ENCODE measurements at regions of chr1 and their contacts with region 1.

Region 1: GRCh38 chr1:39973503-39974135 is 18.7 kb downstream of the MFSD2A start:
- DNase-seq: peak; percentile 70 to 73
- ATAC-seq: peak; percentile 72 to 90 (median 78)
- H3K4me3 ChIP-seq: no peak overlapping the region
- H3K27ac ChIP-seq: no peak overlapping the region
- H3K4me1 ChIP-seq: peaks cover 0 to 6% (median 0%) of the 10 kb centered on the region in 9 donors
- H3K27me3 ChIP-seq: peaks cover 0 to 16% (median 0%) of the 10 kb centered on the region in 7 donors
- CTCF ChIP-seq: peak; percentile 89 to 99 (median 97)

Region 2: GRCh38 chr1:39238476-39238875 is 735.1 kb before region 1 on chr1:
- intact Hi-C with region 1: no loop called
- DNase-seq: peak in 1 of 2 donors; percentile 67
- ATAC-seq: peak; percentile 55 to 85 (median 80)
- H3K4me3 ChIP-seq: no peak overlapping the region
- H3K27ac ChIP-seq: peak overlapping the region in 6 of 10 donors; percentile 16 to 57 (median 43)
- H3K4me1 ChIP-seq: peaks cover 10 to 38% (median 32%) of the 10 kb centered on the region in 9 donors
- H3K27me3 ChIP-seq: no peaks in the 10 kb centered on the region
- CTCF ChIP-seq: no peak

Region 3: GRCh38 chr1:39866767-39867166 is 106.9 kb before region 1 on chr1:
- intact Hi-C with region 1: no loop called
- DNase-seq: no peak
- ATAC-seq: no peak
- H3K4me3 ChIP-seq: no peak overlapping the region
- H3K27ac ChIP-seq: no peak overlapping the region
- H3K4me1 ChIP-seq: peaks cover 0 to 5% (median 0%) of the 10 kb centered on the region in 9 donors
- H3K27me3 ChIP-seq: no peaks in the 10 kb centered on the region
- CTCF ChIP-seq: no peak

Region 4: GRCh38 chr1:39890273-39890672 is 83.3 kb before region 1 on chr1:
- intact Hi-C with region 1: no loop called
- DNase-seq: no peak
- ATAC-seq: no peak
- H3K4me3 ChIP-seq: no peak overlapping the region
- H3K27ac ChIP-seq: peak overlapping the region in 1 of 10 donors; percentile 29
- H3K4me1 ChIP-seq: peaks cover 0 to 43% (median 8%) of the 10 kb centered on the region in 9 donors
- H3K27me3 ChIP-seq: peaks cover 0 to 18% (median 7%) of the 10 kb centered on the region in 7 donors
- CTCF ChIP-seq: no peak

Region 5: DNA sequence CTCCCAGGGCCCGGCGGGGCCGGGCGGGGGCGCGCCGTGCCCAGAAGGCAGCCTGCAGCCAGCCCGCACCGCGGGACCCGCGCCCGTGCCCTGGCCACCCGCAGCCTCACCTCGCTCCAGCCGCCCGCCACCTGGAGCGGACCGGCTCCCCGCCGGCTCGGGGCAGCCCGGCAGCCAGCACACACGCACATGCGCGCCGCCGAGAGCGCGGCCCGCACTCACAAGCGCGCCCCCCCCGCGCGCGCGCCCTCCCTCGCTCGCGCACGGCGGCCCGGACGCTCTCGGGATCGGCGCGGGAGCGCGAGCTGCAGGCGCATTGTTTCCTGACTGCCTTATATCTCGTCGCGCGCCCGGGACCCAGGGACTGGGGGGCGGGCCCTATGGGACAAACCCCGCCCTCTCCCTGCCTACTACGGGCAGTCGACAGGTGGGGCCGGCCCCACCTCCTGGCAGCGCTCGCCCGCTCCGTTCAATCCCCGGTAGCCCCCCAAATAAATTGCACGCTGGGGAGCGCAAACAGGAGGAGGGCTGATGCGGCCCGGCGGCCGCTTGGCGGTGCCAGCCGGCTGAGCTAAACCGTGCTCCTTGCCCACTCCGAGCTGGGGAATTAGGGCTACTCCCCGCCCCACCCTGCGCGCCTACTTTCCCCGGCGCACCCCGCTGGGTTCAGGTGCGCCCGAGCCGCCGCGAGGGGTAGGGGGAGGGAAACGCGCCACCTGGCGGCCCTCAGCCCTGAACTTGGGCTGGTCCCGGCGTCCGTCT is 71.7 kb before region 1 on chr1 and contains the start of gene MYCL:
- intact Hi-C with region 1: loop called in 1 of 10 experiments (anchors 5 kb)
- DNase-seq: peak; percentile 52 to 66
- ATAC-seq: peak; percentile 77 to 91 (median 86)
- H3K4me3 ChIP-seq: peak within 1 kb of the TSS; percentile 43 to 75 (median 64)
- H3K27ac ChIP-seq: peak within 1 kb of the TSS in 2 of 10 donors; percentile 9 to 64
- H3K4me1 ChIP-seq: peaks cover 3 to 19% (median 16%) of the 10 kb centered on the region in 9 donors
- H3K27me3 ChIP-seq: peaks cover 0 to 71% (median 55%) of the 10 kb centered on the region in 7 donors
- CTCF ChIP-seq: peak; percentile 43 to 81 (median 75)
- total RNA-seq, gene MYCL: 0.30 to 2.5 (median 0.76) TPM

Region 6: DNA sequence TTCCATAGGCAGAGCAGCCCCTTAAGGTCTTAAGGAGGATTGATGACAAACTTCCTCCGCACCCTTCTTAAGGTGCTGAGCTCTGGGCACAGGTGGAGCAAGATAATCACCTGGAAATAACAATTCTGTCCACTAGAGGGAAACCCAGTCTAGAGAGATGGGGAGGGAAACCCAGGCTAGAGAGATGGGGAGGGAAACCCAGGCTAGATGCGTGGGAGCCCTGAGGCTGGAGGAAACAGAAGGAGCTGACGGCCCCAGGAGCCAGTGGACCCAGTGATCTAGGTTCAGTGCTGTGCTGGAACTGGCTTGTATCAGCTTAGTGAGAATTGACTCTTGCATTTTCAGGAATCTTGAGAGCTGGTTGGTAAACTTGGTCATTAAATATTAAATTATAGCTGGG is 54.1 kb before region 1 on chr1:
- intact Hi-C with region 1: loop called in 9 of 10 experiments (anchors 1 to 5 kb)
- DNase-seq: no peak
- ATAC-seq: peak; percentile 33 to 78 (median 66)
- H3K4me3 ChIP-seq: no peak overlapping the region
- H3K27ac ChIP-seq: no peak overlapping the region
- H3K4me1 ChIP-seq: peaks cover 0 to 7% (median 4%) of the 10 kb centered on the region in 9 donors
- H3K27me3 ChIP-seq: peaks cover 0 to 46% (median 17%) of the 10 kb centered on the region in 7 donors
- CTCF ChIP-seq: peak in 8 of 9 donors; percentile 22 to 65 (median 52)

Region 7: DNA sequence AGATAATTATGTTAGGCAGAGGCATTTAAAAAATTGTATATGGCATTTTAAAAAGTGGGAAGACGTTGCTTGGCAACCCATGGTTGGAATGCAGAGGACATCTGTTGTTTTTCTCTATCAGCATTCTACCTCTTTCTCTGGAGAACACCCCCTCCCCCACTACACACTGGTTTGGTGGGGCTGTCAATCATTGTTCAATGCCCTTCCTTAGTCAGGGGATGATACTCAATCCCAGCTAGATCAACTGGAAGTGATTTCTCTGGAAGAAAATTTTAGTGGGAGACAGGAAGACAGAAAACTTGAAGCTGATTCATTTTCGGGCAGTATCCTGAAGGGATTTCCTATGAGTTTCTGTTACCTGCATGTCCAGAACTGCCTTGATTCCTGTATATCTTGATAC is 31.2 kb after region 1 on chr1:
- intact Hi-C with region 1: no loop called
- DNase-seq: no peak
- ATAC-seq: no peak
- H3K4me3 ChIP-seq: no peak overlapping the region
- H3K27ac ChIP-seq: no peak overlapping the region
- H3K4me1 ChIP-seq: peaks cover 0 to 13% (median 0%) of the 10 kb centered on the region in 9 donors
- H3K27me3 ChIP-seq: no peaks in the 10 kb centered on the region
- CTCF ChIP-seq: no peak

Region 8: GRCh38 chr1:40040511-40041465 is 67.2 kb after region 1 on chr1 and contains the start of gene CAP1:
- intact Hi-C with region 1: loop called in 1 of 10 experiments (anchors 10 kb)
- DNase-seq: peak; percentile 99 to 100
- ATAC-seq: peak; percentile 94 to 97 (median 96)
- H3K4me3 ChIP-seq: peak within 1 kb of the TSS; percentile 64 to 99 (median 91)
- H3K27ac ChIP-seq: peak within 1 kb of the TSS; percentile 97 to 100 (median 100)
- H3K4me1 ChIP-seq: peaks cover 6 to 85% (median 75%) of the 10 kb centered on the region in 9 donors
- H3K27me3 ChIP-seq: no peaks in the 10 kb centered on the region
- CTCF ChIP-seq: no peak
- total RNA-seq, gene CAP1: 46.4 to 157 (median 55.8) TPM